Naive thymus-derived CD4-positive, alpha-beta T cell (primary cell): ENCODE measurements at regions of chr1 and their contacts with region 1.

Region 1: DNA sequence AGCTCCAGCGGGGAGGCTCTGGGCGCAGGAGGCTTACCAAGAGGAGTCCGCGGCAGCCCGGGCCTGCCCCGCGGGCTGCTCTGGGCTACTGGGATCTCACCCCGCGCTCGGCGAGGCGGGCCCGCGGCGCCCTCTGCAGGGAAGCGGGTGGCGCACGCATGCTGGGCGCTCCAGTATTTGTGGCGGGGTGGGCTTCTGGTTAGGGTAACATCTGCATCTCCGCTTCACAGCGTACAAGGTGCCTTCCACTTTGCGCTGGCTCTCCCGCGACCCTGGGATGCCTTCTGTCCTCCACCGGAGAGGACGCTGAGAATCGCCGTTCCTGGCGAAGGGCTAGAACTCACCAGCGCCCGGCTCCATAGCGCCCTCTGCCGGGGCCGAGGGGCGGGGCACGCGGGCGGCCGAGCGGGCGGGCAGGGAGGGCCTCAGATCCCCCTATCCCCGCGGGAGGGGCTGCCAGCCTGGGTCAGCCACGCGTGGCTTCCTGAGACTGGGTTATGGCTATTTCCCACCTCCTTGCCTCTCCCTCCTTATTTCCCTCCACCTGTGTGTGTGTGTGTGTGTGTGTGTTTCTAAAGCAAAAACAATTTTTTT is 46.6 kb upstream of the CTBS start:
- DNase-seq: peak; percentile 60 to 95 (median 84)
- ATAC-seq: peak; percentile 96
- H3K4me3 ChIP-seq: peak overlapping the region; percentile 85
- H3K4me3 Mint-ChIP-seq: peak overlapping the region; percentile 85 to 97 (median 92)
- H3K27ac ChIP-seq: peak overlapping the region; percentile 68
- H3K27ac Mint-ChIP-seq: peak overlapping the region in 6 of 9 donors; percentile 53 to 89 (median 82)
- H3K4me1 ChIP-seq: peaks cover 0 to 3% of the 10 kb centered on the region in 2 donors
- H3K4me1 Mint-ChIP-seq: peaks cover 0 to 18% (median 5%) of the 10 kb centered on the region in 7 donors
- H3K27me3 ChIP-seq: no peaks in the 10 kb centered on the region
- H3K27me3 Mint-ChIP-seq: peaks cover 0 to 7% (median 0%) of the 10 kb centered on the region in 5 donors

Region 2: GRCh38 chr1:83931658-83932253 is 689.1 kb before region 1 on chr1:
- CTCF ChIA-PET with region 1: no interaction called
- POLR2A ChIA-PET with region 1: no interaction called
- intact Hi-C with region 1: loop called (anchors 2 to 5 kb)
- DNase-seq: peak in 7 of 9 donors; percentile 18 to 60 (median 45)
- ATAC-seq: peak; percentile 79
- H3K4me3 ChIP-seq: no peak overlapping the region
- H3K4me3 Mint-ChIP-seq: no peak overlapping the region
- H3K27ac ChIP-seq: no peak overlapping the region
- H3K27ac Mint-ChIP-seq: no peak overlapping the region
- H3K4me1 ChIP-seq: no peaks in the 10 kb centered on the region
- H3K4me1 Mint-ChIP-seq: no peaks in the 10 kb centered on the region
- H3K27me3 ChIP-seq: no peaks in the 10 kb centered on the region
- H3K27me3 Mint-ChIP-seq: peaks cover 4 to 19% (median 7%) of the 10 kb centered on the region in 5 donors

Region 3: DNA sequence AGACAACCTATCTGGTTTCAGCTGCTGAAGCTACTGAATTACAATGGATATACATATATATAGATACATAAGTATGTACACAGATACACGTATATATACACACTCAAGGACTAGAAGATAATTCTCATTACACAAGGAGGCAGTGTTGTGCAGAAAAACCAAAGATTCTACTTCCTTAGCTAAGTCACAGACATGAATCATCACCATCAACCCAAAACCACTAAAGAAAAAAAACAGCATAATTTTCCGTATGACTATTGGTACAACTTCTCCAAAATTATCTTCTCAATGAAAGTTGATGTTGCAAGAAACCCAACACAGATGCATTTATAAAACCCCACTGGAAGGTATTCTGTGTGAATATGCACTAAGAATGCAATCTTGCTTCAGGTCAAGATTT is 178.6 kb before region 1 on chr1:
- CTCF ChIA-PET with region 1: interaction called, 37 read pairs
- POLR2A ChIA-PET with region 1: interaction called, 4 read pairs
- intact Hi-C with region 1: loop called (anchors 1 kb)
- DNase-seq: peak in 7 of 9 donors; percentile 51 to 77 (median 66)
- ATAC-seq: peak; percentile 99
- H3K4me3 ChIP-seq: no peak overlapping the region
- H3K4me3 Mint-ChIP-seq: peak overlapping the region; percentile 14 to 66 (median 41)
- H3K27ac ChIP-seq: no peak overlapping the region
- H3K27ac Mint-ChIP-seq: peak overlapping the region in 5 of 9 donors; percentile 35 to 81 (median 72)
- H3K4me1 ChIP-seq: peaks cover 10 to 21% of the 10 kb centered on the region in 2 donors
- H3K4me1 Mint-ChIP-seq: peaks cover 5 to 24% (median 16%) of the 10 kb centered on the region in 7 donors
- H3K27me3 ChIP-seq: no peaks in the 10 kb centered on the region
- H3K27me3 Mint-ChIP-seq: peaks cover 0 to 16% (median 11%) of the 10 kb centered on the region in 5 donors

Region 4: DNA sequence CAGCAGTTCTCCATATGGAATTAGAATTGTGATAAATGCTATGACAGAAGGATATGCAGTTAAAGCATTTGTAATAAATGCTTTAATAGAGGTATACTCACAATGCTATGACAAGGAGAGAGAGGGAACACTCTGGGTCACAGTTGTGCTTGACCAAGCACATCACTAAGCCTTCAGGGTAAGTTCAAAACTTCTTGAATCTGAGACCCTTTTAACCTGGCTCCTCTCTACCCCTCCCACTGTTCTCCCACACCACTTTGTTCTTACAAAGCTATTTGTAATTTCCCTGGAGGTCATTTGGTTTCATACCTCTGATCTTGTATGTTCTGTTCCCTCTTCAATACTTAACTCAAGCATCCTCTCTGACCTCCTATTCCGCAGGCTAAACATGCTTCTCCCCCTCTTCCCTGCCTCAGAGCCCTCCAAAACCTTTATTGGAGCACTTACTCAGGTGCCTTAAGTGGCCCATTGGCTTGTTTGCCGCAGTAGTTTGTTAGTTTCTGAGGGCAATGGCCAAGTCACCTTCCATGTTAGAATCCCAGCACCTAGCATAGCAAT is 14.5 kb after region 1 on chr1:
- CTCF ChIA-PET with region 1: no interaction called
- POLR2A ChIA-PET with region 1: no interaction called
- intact Hi-C with region 1: no loop called
- DNase-seq: no peak
- ATAC-seq: no peak
- H3K4me3 ChIP-seq: no peak overlapping the region
- H3K4me3 Mint-ChIP-seq: no peak overlapping the region
- H3K27ac ChIP-seq: no peak overlapping the region
- H3K27ac Mint-ChIP-seq: no peak overlapping the region
- H3K4me1 ChIP-seq: no peaks in the 10 kb centered on the region
- H3K4me1 Mint-ChIP-seq: peaks cover 0 to 8% (median 0%) of the 10 kb centered on the region in 7 donors
- H3K27me3 ChIP-seq: no peaks in the 10 kb centered on the region
- H3K27me3 Mint-ChIP-seq: peaks cover 4 to 17% (median 7%) of the 10 kb centered on the region in 5 donors

Region 5: GRCh38 chr1:84753516-84754385 is 132.9 kb after region 1 on chr1:
- CTCF ChIA-PET with region 1: interaction called, 4 read pairs
- POLR2A ChIA-PET with region 1: no interaction called
- intact Hi-C with region 1: loop called (anchors 1 kb)
- DNase-seq: peak; percentile 47 to 77 (median 67)
- ATAC-seq: peak; percentile 93
- H3K4me3 ChIP-seq: no peak overlapping the region
- H3K4me3 Mint-ChIP-seq: no peak overlapping the region
- H3K27ac ChIP-seq: no peak overlapping the region
- H3K27ac Mint-ChIP-seq: peak overlapping the region in 1 of 9 donors; percentile 29
- H3K4me1 ChIP-seq: no peaks in the 10 kb centered on the region
- H3K4me1 Mint-ChIP-seq: peaks cover 0 to 7% (median 3%) of the 10 kb centered on the region in 7 donors
- H3K27me3 ChIP-seq: no peaks in the 10 kb centered on the region
- H3K27me3 Mint-ChIP-seq: peaks cover 9 to 26% (median 18%) of the 10 kb centered on the region in 5 donors